ENCODE measurements at regions of chr1 and their contacts with region 1.

Region 1: GRCh38 chr1:79460773-79461436 is 454.4 kb upstream of the ADGRL4 start:
- DNase-seq: peak; percentile 17
- H3K4me3 ChIP-seq: no peak overlapping the region
- H3K27ac ChIP-seq: no peak overlapping the region
- H3K4me1 ChIP-seq: peaks cover 4% of the 10 kb centered on the region
- CTCF ChIP-seq: no peak

Region 2: DNA sequence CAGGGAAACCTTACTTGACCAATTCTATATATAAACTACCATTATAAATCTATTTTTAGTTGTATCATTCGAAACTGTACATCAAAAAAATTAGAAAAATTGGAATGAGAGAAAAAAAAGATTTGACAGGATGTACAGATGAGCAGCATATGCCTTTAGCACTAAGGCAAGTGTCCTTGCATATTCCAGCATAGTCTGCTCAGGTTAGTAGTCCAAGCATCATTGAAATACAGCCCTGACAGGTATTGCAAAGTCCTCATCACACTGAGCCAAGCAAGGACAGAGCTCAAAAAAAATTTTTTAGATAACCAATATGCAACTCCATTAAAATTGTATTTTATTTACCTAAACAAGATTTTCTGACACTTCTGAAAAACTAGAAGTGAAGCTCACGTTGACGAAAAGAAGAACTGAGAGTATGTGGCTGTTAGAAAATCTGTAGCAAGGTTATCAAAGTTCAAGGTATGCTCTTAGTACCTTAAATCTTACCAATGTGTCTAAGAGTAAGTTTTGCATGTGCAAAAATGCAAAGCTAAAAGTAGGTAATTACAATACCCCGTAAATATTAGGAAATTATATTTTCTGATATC is 11.3 kb after region 1 on chr1:
- CTCF ChIA-PET with region 1: no interaction called
- POLR2A ChIA-PET with region 1: interaction called, 10 read pairs
- intact Hi-C with region 1: no loop called
- DNase-seq: peak; percentile 44
- H3K4me3 ChIP-seq: no peak overlapping the region
- H3K27ac ChIP-seq: peak overlapping the region; percentile 34
- H3K4me1 ChIP-seq: peaks cover 14% of the 10 kb centered on the region
- CTCF ChIP-seq: no peak